Activated B cell treated with CpG ODN at 0.5 μM for 24 hours (primary cell): ENCODE measurements at regions of chr9 and their contacts with region 1.

Region 1: GRCh38 chr9:70413798-70414775 is at the start of gene KLF9:
- DNase-seq: peak; percentile 78
- ATAC-seq: peak; percentile 72
- H3K4me3 Mint-ChIP-seq: peak within 1 kb of the TSS; percentile 97
- H3K27ac Mint-ChIP-seq: peak within 1 kb of the TSS; percentile 100
- H3K4me1 Mint-ChIP-seq: peaks cover 52% of the 10 kb centered on the region
- H3K27me3 Mint-ChIP-seq: no peaks in the 10 kb centered on the region
- CTCF ChIP-seq: no peak
- total RNA-seq, gene KLF9: 5.2 and 6.3 TPM in 2 replicates

Region 2: DNA sequence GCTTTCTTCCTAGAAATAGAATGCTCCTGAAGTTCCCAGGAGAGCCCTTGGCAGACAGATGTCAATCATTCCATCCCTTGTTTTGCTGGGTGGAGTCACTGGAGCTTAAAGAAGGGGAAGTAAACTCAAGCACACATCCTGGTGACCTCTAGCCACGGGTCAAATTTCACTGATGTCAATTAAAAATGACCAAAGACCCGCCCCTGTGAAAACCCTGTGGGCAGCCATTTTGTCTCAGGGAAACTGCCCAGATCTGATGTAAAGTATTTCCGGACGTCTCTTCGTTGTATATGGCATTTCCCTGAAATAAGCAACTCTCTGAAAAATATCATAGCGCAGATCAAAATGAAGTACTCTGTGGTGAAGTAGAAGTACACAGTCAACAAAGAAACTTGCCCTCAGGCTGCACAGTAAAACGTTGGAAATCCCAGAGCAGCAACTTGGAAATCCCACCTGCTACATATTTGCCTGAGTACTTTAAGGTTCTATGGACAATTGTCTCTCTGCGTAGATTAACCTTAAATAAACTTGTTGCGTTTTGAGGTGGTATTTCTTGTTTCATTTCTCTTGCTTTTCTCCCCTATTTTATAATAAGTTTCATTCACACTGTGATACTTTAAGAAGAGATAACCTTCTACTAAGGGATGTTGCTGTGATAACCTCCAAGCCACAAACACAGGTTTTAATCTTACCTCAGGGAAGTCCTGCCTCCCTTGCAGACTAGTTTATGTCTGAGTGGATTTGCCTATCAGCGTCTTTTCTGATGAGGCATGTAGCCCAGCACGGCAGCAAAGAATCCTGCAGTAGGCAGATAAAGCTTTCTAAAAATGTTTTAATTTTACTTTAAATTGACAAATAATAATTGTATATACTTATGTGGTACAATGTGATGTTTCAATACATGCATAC is 1769.9 kb before region 1 on chr9:
- CTCF ChIA-PET with region 1: no interaction called
- POLR2A ChIA-PET with region 1: no interaction called
- intact Hi-C with region 1: loop called (anchors 10 kb)
- DNase-seq: peak; percentile 31
- ATAC-seq: peak; percentile 63
- H3K4me3 Mint-ChIP-seq: peak overlapping the region; percentile 73
- H3K27ac Mint-ChIP-seq: peak overlapping the region; percentile 94
- H3K4me1 Mint-ChIP-seq: peaks cover 93% of the 10 kb centered on the region
- H3K27me3 Mint-ChIP-seq: no peaks in the 10 kb centered on the region
- CTCF ChIP-seq: no peak

Region 3: DNA sequence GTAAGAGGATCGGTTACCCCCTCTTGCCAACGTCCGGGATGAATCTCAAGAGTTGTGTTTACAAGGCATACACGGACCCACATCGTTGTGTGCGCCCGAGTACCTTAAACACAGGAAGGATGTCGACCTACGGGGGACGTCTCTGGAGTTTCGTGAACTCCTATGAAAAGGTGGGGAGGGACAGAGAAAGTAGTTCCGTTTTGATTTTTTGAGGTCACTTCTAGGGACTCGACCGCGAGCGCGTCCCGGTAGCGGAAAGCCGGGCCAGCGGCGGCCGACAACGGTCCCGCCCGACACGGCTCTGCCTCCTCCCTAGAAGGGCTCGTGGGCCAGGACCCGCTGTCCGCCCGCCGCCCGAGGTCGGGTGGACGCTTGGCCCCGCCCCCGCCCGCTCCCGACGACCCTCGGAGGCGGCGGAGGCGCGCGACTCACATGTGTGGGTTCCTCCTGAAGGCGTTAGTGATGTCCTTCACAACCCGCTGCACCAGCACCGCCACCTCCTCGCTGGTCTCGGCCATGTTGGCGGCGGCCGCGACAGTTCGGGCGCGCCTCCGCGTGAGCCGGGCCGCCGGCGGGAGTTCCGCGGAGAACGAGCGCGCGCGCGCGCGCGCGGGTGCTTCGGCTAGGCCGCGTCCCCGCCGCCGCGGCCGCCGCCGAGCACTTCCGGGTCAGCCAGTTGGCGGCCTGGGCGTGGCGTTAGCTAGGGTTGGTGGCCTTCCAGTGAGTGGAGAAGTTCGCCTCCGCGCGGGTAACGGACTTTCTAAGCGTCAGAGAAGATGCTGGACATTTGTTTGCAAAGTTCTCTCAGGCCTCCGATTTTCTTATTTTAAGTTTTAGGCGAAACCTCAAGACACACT is 654.4 kb before region 1 on chr9 and contains the start of gene PTAR1:
- CTCF ChIA-PET with region 1: no interaction called
- POLR2A ChIA-PET with region 1: interaction called, 3 read pairs
- intact Hi-C with region 1: loop called (anchors 1 kb)
- DNase-seq: peak; percentile 92
- ATAC-seq: peak; percentile 86
- H3K4me3 Mint-ChIP-seq: peak within 1 kb of the TSS; percentile 95
- H3K27ac Mint-ChIP-seq: peak within 1 kb of the TSS; percentile 94
- H3K4me1 Mint-ChIP-seq: peaks cover 25% of the 10 kb centered on the region
- H3K27me3 Mint-ChIP-seq: no peaks in the 10 kb centered on the region
- CTCF ChIP-seq: no peak
- total RNA-seq, gene PTAR1: 39.3 and 49.5 TPM in 2 replicates

Region 4: GRCh38 chr9:70352802-70353201 is 61.3 kb before region 1 on chr9:
- CTCF ChIA-PET with region 1: no interaction called
- POLR2A ChIA-PET with region 1: no interaction called
- intact Hi-C with region 1: loop called (anchors 1 kb)
- DNase-seq: no peak
- ATAC-seq: no peak
- H3K4me3 Mint-ChIP-seq: no peak overlapping the region
- H3K27ac Mint-ChIP-seq: no peak overlapping the region
- H3K4me1 Mint-ChIP-seq: no peaks in the 10 kb centered on the region
- H3K27me3 Mint-ChIP-seq: no peaks in the 10 kb centered on the region
- CTCF ChIP-seq: no peak

Region 5: DNA sequence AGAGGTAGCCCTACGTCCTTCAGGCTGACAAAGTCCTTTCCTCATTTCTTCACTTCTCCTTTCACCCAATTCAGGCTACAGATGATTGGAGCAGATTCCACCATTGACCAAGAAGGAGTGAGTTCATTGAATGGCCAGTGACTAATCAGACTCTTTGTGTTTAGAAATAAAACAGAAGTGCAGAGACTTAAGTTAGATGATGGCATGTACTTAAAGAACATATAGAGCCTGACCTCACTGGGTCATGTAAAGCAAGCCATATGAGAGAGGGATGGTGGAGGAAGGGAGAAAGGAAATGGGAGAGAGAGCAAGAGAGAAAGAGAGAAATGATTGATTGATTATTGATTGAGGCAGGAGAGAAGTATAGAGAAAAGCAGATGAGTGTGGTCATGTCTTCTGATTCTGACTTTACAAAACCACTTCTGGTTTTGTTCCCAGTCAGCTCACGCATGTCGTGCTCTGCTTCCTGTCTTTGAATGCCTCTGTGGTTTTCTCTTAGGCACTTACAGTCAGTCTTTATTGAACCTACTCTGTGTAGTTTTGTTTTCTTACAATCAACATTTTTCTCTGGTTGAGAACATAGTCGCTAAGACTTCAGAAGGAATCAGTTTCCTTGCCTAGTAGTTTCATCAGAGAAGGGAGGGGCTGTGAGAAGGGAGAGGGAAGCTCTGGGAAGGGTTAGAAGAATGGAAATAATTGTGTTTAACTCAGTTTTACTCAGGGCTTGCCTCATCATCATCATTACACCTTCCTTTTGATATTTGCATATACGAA is 149.5 kb after region 1 on chr9:
- CTCF ChIA-PET with region 1: no interaction called
- POLR2A ChIA-PET with region 1: interaction called, 23 read pairs
- intact Hi-C with region 1: loop called (anchors 2 kb)
- DNase-seq: peak; percentile 20
- ATAC-seq: peak; percentile 93
- H3K4me3 Mint-ChIP-seq: peak overlapping the region; percentile 72
- H3K27ac Mint-ChIP-seq: peak overlapping the region; percentile 95
- H3K4me1 Mint-ChIP-seq: peaks cover 27% of the 10 kb centered on the region
- H3K27me3 Mint-ChIP-seq: no peaks in the 10 kb centered on the region
- CTCF ChIP-seq: no peak

Region 6: GRCh38 chr9:70772601-70773000 is 358.5 kb after region 1 on chr9:
- CTCF ChIA-PET with region 1: no interaction called
- POLR2A ChIA-PET with region 1: no interaction called
- intact Hi-C with region 1: no loop called
- DNase-seq: no peak
- ATAC-seq: no peak
- H3K4me3 Mint-ChIP-seq: no peak overlapping the region
- H3K27ac Mint-ChIP-seq: no peak overlapping the region
- H3K4me1 Mint-ChIP-seq: no peaks in the 10 kb centered on the region
- H3K27me3 Mint-ChIP-seq: no peaks in the 10 kb centered on the region
- CTCF ChIP-seq: no peak

Region 7: GRCh38 chr9:71795097-71795813 is 1381.2 kb after region 1 on chr9:
- CTCF ChIA-PET with region 1: no interaction called
- POLR2A ChIA-PET with region 1: interaction called, 3 read pairs
- intact Hi-C with region 1: loop called (anchors 10 kb)
- DNase-seq: no peak
- ATAC-seq: peak; percentile 84
- H3K4me3 Mint-ChIP-seq: peak overlapping the region; percentile 67
- H3K27ac Mint-ChIP-seq: peak overlapping the region; percentile 87
- H3K4me1 Mint-ChIP-seq: peaks cover 79% of the 10 kb centered on the region
- H3K27me3 Mint-ChIP-seq: no peaks in the 10 kb centered on the region
- CTCF ChIP-seq: no peak